Spleen (tissue), 13 donors: ENCODE measurements at regions of chr3 and their contacts with region 1.

Region 1: DNA sequence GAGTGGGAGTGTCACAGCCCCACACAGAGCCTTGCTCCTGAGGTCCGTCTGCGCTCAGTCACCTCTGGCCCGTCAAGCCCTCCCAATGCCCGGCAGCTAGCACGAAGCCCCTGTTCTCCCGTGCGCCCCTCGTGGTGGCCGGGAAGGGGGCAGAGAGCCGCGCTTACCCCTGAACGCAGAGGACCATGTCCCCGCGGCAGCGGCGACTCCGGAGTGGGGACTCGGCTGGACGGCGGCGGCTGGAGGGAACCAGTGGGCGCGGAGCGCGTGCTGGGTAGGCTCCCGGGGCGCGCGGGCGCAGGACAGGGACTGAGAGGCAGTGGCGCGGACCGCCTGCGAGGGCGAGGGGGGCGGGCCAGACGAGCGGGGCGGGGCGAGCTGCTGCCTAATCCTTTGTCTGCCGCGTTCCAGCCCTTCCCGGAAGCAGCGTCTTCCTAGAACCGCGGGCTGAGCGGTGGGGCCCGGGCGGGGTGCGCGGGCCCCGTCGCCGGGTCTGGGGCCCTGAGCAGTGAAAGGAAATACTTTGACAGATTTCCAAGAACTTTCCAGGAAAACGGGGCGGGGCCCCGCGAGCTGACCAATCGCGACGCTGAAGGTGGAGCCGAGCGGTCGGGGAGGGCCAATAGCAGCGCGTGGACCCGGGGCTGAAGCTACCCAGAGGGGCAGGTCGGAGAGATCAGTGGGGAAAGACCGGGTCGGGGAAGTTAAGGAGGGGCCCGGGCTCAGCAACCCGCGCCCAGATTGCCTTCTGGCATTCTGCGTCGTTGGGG is at the start of gene CISH:
- DNase-seq: peak; percentile 99
- H3K4me3 ChIP-seq: peak within 1 kb of the TSS; percentile 63 to 85 (median 71)
- H3K27ac ChIP-seq: peak within 1 kb of the TSS; percentile 82 to 93 (median 90)
- H3K4me1 ChIP-seq: peaks cover 31 to 88% (median 79%) of the 10 kb centered on the region in 6 donors
- H3K27me3 ChIP-seq: no peaks in the 10 kb centered on the region
- CTCF ChIP-seq: peak in 8 of 11 experiments; percentile 27 to 62 (median 41)
- POLR2A ChIP-seq: peak in 2 of 3 donors; percentile 59 to 68
- total RNA-seq, gene CISH: 8.7 to 23.6 (median 14.0) TPM

Region 2: GRCh38 chr3:50572158-50572557 is 39.5 kb before region 1 on chr3:
- intact Hi-C with region 1: loop called (anchors 1 kb)
- DNase-seq: peak; percentile 93
- H3K4me3 ChIP-seq: peak overlapping the region in 1 of 8 donors; percentile 6
- H3K27ac ChIP-seq: peak overlapping the region; percentile 10 to 93 (median 62)
- H3K4me1 ChIP-seq: peaks cover 21 to 89% (median 66%) of the 10 kb centered on the region in 6 donors
- H3K27me3 ChIP-seq: no peaks in the 10 kb centered on the region
- CTCF ChIP-seq: peak; percentile 91 to 98 (median 96)
- POLR2A ChIP-seq: no peak

Region 3: DNA sequence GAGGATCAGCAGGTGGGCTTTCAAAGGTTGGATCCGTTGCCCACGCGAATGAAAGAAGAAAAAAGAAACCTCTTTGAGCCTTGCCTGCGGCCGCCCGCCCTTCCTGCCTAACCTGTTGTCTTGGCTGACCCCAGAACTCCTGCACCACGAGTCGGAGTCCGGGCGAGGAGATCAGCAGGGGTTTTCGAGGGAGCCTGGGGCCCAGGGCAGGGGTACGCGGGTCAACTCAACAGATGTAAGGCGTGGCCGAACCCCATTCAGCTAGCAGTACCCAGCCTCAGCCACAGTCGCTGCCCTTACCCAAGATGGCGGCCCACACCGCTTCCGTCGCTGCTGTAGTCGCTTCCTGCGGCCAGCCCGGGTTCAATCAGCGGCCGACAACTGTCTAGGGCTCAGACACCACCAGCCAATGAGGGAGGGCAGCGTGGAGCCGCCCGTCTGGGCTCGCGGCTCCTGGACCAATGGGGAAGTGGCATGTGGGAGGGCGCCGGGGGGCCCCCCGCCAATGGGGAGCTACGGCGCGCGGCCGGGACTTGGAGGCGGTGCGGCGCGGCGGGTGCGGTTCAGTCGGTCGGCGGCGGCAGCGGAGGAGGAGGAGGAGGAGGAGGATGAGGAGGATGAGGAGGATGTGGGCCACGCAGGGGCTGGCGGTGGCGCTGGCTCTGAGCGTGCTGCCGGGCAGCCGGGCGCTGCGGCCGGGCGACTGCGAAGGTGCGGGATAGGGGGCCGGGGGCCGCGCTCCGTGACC is 773.3 kb after region 1 on chr3 and contains the start of gene MANF:
- intact Hi-C with region 1: loop called (anchors 5 kb)
- DNase-seq: peak; percentile 99
- H3K4me3 ChIP-seq: peak within 1 kb of the TSS; percentile 70 to 90 (median 84)
- H3K27ac ChIP-seq: peak within 1 kb of the TSS; percentile 91 to 98 (median 94)
- H3K4me1 ChIP-seq: peaks cover 26 to 67% (median 53%) of the 10 kb centered on the region in 6 donors
- H3K27me3 ChIP-seq: no peaks in the 10 kb centered on the region
- CTCF ChIP-seq: peak in 8 of 11 experiments; percentile 11 to 71 (median 38)
- POLR2A ChIP-seq: peak in 2 of 3 donors; percentile 76 to 81
- total RNA-seq, gene MANF: 32.0 to 85.8 (median 51.0) TPM